H1 (cell line): ENCODE measurements at regions of chr11 and their contacts with region 1.

Region 1: GRCh38 chr11:2325719-2326118 is 23.9 kb downstream of the TSPAN32 start:
- DNase-seq: no peak
- H3K4me3 ChIP-seq: no peak overlapping the region
- H3K27ac ChIP-seq: no peak overlapping the region
- H3K4me1 ChIP-seq: no peaks in the 10 kb centered on the region
- H3K27me3 ChIP-seq: no peaks in the 10 kb centered on the region
- CTCF ChIP-seq: no peak
- EP300 ChIP-seq: no peak
- POLR2A ChIP-seq: no peak
- RAD21 ChIP-seq: no peak

Region 2: DNA sequence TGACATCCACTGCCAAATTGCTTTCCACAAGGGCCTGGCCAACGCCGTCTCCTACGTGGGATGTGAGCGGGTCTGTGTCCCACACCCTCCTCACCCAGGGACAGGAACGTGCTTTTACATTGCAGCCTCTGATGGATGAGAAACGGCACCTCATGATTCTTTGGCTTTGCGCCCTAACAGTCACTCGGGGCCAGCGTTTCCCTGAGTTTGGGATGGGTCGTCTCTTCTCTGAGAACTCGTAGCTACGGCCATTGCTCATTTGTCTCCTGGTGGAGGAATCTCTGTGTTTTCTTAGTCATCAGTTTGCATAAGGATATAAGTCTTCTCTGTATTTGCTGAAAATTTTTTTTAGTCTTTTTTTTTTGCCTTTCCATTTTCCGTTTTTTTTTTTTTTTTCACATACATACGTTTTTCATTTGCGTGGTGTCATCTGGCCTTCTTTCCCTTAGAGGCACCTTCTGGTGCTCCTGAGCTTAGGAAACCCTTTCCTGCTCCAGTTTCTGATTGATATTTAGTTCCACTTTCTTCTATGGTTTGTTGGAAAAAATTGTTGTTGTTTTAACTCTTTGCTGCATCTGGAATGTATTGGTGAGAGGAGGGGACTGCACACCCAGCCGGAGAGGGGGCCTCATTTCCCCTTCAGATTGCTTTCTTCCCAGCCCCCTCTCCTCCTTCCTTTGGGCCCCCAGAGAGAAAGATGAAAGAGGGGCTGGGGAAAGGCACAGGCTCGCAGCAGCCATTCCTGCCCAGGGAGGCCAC is 394.2 kb before region 1 on chr11:
- CTCF ChIA-PET with region 1: no interaction called
- POLR2A ChIA-PET with region 1: no interaction called
- DNase-seq: no peak
- H3K4me3 ChIP-seq: no peak overlapping the region
- H3K27ac ChIP-seq: no peak overlapping the region
- H3K4me1 ChIP-seq: peaks cover 0 to 3% (median 0%) of the 10 kb centered on the region in 4 experiments; a peak in 3 of 7 replicates
- H3K27me3 ChIP-seq: no peaks in the 10 kb centered on the region
- CTCF ChIP-seq: no peak
- EP300 ChIP-seq: no peak
- POLR2A ChIP-seq: no peak
- RAD21 ChIP-seq: no peak

Region 3: GRCh38 chr11:2293984-2294925 is 31.5 kb before region 1 on chr11:
- CTCF ChIA-PET with region 1: no interaction called
- POLR2A ChIA-PET with region 1: no interaction called
- DNase-seq: peak in 1 of 2 experiments; percentile 45
- H3K4me3 ChIP-seq: no peak overlapping the region
- H3K27ac ChIP-seq: no peak overlapping the region
- H3K4me1 ChIP-seq: peaks cover 0 to 5% (median 3%) of the 10 kb centered on the region in 4 experiments; a peak in 2 of 7 replicates
- H3K27me3 ChIP-seq: peaks cover 0 to 6% (median 2%) of the 10 kb centered on the region in 4 experiments; a peak in 4 of 7 replicates
- CTCF ChIP-seq: peak; percentile 44 to 54 (median 49)
- EP300 ChIP-seq: no peak
- POLR2A ChIP-seq: no peak
- RAD21 ChIP-seq: peak; percentile 63 to 66

Region 4: GRCh38 chr11:2314525-2315394 is 11.0 kb before region 1 on chr11:
- CTCF ChIA-PET with region 1: interaction called, 10 read pairs
- POLR2A ChIA-PET with region 1: no interaction called
- DNase-seq: no peak
- H3K4me3 ChIP-seq: no peak overlapping the region
- H3K27ac ChIP-seq: no peak overlapping the region
- H3K4me1 ChIP-seq: no peaks in the 10 kb centered on the region
- H3K27me3 ChIP-seq: peaks cover 0 to 1% (median 0%) of the 10 kb centered on the region in 4 experiments; a peak in 1 of 7 replicates
- CTCF ChIP-seq: no peak
- EP300 ChIP-seq: no peak
- POLR2A ChIP-seq: no peak
- RAD21 ChIP-seq: no peak

Region 5: DNA sequence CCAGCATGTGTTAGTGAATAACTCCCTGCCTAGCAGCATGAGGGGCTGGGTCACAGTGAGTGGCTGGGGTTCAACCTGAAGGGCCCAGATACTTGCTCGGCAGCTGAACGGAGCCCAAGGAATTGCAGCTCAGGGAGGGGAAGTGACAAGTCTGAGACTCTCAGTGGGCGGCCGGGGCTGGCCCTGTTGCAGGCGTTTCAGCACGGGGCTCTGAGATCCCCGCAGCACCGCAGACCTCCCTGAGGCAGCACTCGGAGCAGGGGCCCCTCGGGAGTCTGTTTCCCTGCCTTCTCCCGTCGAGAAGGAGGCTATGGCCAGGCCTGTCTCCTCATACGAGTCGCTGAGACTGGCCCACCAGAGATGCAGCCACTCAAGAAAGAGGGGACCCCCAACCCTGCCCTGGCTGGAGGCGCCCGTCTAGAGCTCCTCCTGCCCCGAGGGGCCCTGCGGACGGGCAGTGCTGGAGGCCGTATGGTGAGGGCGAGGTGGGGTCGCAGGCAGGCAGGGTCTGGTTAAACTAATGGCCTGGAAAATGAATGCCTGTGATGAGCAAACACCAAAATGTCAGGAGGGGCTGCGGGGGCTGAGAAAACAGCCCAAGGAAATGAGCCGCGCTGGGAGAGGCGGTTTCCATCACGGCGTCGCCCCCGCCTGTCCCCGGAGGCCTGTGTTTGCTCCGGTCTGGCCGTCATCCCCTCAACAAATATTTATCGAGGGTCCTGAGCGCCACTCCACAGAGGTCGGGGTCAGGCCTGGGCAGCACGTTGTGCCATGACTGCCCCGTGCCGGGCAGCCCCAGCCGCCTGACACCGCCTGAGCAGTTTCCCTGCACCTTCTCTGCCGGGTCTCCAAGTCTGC is 84.1 kb after region 1 on chr11:
- CTCF ChIA-PET with region 1: no interaction called
- POLR2A ChIA-PET with region 1: no interaction called
- DNase-seq: no peak
- H3K4me3 ChIP-seq: no peak overlapping the region
- H3K27ac ChIP-seq: no peak overlapping the region
- H3K4me1 ChIP-seq: no peaks in the 10 kb centered on the region
- H3K27me3 ChIP-seq: no peaks in the 10 kb centered on the region; a peak in 1 of 7 replicates
- CTCF ChIP-seq: no peak
- EP300 ChIP-seq: no peak
- POLR2A ChIP-seq: no peak
- RAD21 ChIP-seq: no peak

Region 6: GRCh38 chr11:2612884-2613571 is 287.3 kb after region 1 on chr11:
- CTCF ChIA-PET with region 1: no interaction called
- POLR2A ChIA-PET with region 1: no interaction called
- DNase-seq: no peak
- H3K4me3 ChIP-seq: no peak overlapping the region
- H3K27ac ChIP-seq: no peak overlapping the region
- H3K4me1 ChIP-seq: no peaks in the 10 kb centered on the region
- H3K27me3 ChIP-seq: peaks cover 23 to 68% (median 49%) of the 10 kb centered on the region in 4 experiments
- CTCF ChIP-seq: no peak
- EP300 ChIP-seq: no peak
- POLR2A ChIP-seq: no peak
- RAD21 ChIP-seq: no peak